ENCODE measurements at regions of chr21 and their contacts with region 1.

Region 1: GRCh38 chr21:42878993-42879787 is at the start of gene WDR4:
- DNase-seq: peak; percentile 100
- H3K4me3 Mint-ChIP-seq: peak within 1 kb of the TSS; percentile 97
- H3K27ac Mint-ChIP-seq: peak within 1 kb of the TSS; percentile 96
- H3K4me1 Mint-ChIP-seq: peaks cover 20% of the 10 kb centered on the region
- H3K27me3 Mint-ChIP-seq: peaks cover 2% of the 10 kb centered on the region
- total RNA-seq, gene WDR4: 73.5 and 75.1 TPM in 2 replicates

Region 2: DNA sequence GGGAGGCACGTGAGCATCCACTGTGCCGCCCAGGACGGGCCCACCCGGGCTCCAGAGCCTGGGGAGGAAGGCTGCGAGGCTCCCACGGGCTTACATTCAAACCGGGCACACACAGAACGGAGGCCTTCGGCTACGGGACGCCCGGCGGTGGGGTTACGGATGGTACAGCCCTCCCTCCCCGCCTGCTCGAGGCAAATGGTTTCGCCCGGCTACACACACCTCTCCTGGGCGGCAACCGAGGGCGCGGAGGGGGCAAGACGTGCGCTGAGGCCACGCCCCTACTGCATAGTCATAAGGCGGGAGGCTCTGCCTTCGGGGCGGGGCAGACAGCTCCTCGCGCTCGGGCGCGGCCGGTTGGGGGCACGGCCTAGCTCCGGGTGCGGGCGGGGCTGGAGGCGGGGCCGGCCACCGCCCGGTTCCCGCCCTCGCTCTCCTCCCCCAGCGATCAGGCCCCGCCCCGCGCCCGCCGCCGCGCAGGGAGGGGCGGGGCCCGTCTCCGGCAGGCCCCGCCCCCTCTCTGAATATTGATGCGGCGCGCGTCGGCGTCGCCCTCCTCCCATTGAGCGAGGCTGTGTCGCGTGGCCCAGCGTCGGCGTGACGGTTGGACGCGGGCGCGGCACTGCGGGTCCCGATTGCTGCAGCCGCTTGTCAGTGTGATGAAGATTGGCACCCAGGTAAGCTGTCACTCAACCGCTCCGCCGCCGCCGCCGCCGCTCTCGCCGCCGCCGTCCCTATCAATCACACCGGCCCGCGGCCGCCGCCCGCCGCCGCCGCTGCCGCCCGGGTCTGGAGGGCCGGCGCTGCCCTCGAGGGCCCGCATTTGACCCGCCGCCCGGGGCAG is 95.0 kb after region 1 on chr21 and contains the start of gene PKNOX1:
- intact Hi-C with region 1: loop called (anchors 1 kb)
- DNase-seq: peak; percentile 100
- H3K4me3 Mint-ChIP-seq: peak within 1 kb of the TSS; percentile 90
- H3K27ac Mint-ChIP-seq: peak within 1 kb of the TSS; percentile 94
- H3K4me1 Mint-ChIP-seq: peaks cover 26% of the 10 kb centered on the region
- H3K27me3 Mint-ChIP-seq: no peaks in the 10 kb centered on the region
- total RNA-seq, gene PKNOX1: 23.1 and 26.2 TPM in 2 replicates

Measured in activated CD4-positive, alpha-beta T cell treated with anti-CD3 and anti-CD28 coated beads, Interleukin-2, amount 10 ng/mL, durations not matched to agents 24 days and 14 days (primary cell).